Activated naive CD4-positive, alpha-beta T cell treated with anti-CD3 and anti-CD28 coated beads for 36 hours (primary cell): ENCODE measurements at regions of chr10 and their contacts with region 1.

Region 1: DNA sequence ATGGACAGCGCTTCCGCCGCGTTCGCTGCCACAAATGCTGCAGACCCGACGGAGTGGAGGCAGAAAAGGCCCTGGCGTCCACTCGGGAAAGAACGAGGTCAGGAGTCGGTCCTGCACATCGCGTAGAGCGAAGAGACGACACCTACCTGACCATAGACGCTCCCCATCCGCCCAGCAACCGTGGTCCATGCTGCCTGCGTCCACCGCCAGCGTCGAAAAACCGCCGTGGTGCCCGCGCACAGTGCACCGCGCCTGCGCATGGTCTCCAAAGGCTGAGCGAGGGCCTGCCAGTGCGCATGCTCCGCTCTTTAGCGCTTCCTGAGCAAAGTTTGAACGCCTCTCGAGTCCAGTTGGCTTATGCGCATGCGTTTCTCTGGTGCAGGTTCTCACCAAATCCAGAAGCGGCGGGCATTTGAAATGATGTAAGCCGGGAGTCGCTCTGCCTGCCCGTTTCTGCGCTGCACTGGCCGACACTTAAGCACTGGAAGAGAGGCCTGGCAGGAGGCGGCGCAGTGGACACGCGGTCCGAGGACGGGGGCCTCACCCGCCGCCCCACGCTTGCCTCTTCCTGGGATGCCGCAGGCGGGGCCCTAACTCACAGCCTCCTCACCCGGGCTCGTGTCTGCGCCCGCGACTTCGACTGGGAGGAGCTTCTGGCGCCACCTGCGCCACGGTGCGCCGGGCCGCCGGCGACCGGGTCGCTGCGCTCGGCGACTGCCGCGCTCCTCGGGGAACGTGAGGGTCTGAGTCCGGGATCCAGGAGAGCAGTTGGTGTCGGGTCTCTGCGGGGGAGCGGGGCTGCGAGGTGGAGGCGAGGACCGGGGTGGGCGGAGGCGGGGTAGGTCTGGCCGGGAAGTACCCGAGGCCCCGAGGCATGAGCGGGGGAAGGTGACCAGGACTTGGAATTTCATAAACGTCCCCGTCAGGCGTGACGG is at the start of gene FAM24B:
- DNase-seq: peak; percentile 95
- H3K4me3 Mint-ChIP-seq: peak within 1 kb of the TSS; percentile 82
- H3K27ac Mint-ChIP-seq: peak within 1 kb of the TSS; percentile 90
- H3K4me1 Mint-ChIP-seq: peaks cover 45% of the 10 kb centered on the region
- H3K27me3 Mint-ChIP-seq: peaks cover 3% of the 10 kb centered on the region
- total RNA-seq, gene FAM24B: 8.0 to 8.1 TPM

Region 2: DNA sequence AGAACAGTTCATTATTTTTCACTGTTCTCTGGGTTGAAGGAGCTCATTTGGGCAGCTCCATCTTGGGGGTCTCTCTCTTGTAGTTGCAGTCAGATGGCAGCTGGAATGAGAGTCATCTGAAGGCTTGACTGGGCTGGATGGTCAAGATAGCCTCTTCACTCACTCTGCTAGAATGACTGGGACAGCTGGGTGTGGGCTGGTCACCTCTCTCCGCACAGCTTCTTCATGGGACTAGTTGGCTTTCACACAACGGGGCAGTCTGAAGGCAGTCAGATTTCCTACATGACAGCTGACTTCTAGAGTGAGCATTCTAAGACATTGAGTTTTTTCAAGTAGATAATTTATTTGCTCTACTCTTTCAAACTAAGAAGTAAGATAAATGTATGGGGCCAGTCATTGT is 492.0 kb before region 1 on chr10:
- CTCF ChIA-PET with region 1: no interaction called
- intact Hi-C with region 1: no loop called
- DNase-seq: no peak
- H3K4me3 Mint-ChIP-seq: no peak overlapping the region
- H3K27ac Mint-ChIP-seq: no peak overlapping the region
- H3K4me1 Mint-ChIP-seq: peaks cover 60% of the 10 kb centered on the region
- H3K27me3 Mint-ChIP-seq: no peaks in the 10 kb centered on the region

Region 3: GRCh38 chr10:122911889-122912484 is 32.4 kb after region 1 on chr10:
- CTCF ChIA-PET with region 1: no interaction called
- intact Hi-C with region 1: loop called (anchors 2 kb)
- DNase-seq: peak; percentile 74
- H3K4me3 Mint-ChIP-seq: no peak overlapping the region
- H3K27ac Mint-ChIP-seq: no peak overlapping the region
- H3K4me1 Mint-ChIP-seq: no peaks in the 10 kb centered on the region
- H3K27me3 Mint-ChIP-seq: peaks cover 8% of the 10 kb centered on the region

Region 4: DNA sequence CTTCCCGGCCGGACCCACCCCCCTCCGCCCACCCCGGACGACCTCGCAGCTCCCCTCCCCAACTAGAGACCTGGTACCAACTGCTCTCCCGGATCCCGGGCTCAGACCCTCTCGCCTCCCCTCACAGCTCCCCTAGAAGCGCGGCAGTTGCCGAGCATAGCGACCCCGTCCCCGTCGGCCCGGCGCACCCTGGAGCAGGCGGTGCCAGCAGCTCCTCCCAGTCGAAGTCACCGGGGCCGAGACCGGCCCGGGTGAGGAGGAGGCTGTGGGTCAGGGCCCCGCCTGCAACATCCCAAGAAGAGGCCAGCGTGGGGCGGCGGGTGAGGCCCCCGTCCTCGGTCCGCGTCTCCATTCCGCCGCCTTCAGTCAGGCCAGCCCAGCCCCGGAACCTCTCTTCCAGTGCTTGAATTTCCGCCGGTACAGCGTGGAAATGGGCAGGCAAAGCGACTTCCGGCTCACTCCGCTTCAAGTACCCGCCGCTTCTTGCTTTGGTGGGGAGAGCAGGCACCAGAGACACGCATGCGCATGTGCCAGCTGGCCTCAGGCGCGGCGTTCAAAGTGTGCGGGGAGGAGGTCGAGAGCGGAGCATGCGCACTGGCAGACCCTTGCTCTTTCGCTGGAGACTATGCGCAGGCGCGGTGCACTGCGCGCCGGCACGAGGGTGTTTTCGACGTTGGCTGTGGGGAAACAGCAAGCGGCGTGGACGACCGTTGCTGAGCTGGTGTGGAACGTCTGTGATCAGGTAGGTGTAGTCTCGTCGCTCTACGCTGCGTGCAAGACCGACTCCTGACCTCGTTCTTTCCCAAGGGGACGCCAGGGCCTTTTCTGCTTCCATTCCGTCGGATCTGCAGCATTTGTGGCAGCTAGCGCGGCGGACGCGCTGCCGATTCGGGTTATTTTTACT is 74.5 kb after region 1 on chr10 and contains the start of gene C10orf88:
- CTCF ChIA-PET with region 1: no interaction called
- intact Hi-C with region 1: loop called (anchors 1 kb)
- DNase-seq: peak; percentile 97
- H3K4me3 Mint-ChIP-seq: peak within 1 kb of the TSS; percentile 81
- H3K27ac Mint-ChIP-seq: peak within 1 kb of the TSS; percentile 82
- H3K4me1 Mint-ChIP-seq: peaks cover 28% of the 10 kb centered on the region
- H3K27me3 Mint-ChIP-seq: no peaks in the 10 kb centered on the region
- total RNA-seq, gene C10orf88: 4.2 to 5.2 TPM

Region 5: GRCh38 chr10:122980209-122981065 is 100.8 kb after region 1 on chr10 and contains the start of gene PSTK:
- CTCF ChIA-PET with region 1: no interaction called
- intact Hi-C with region 1: loop called (anchors 1 kb)
- DNase-seq: peak; percentile 90
- H3K4me3 Mint-ChIP-seq: peak within 1 kb of the TSS; percentile 87
- H3K27ac Mint-ChIP-seq: peak within 1 kb of the TSS; percentile 92
- H3K4me1 Mint-ChIP-seq: peaks cover 17% of the 10 kb centered on the region
- H3K27me3 Mint-ChIP-seq: no peaks in the 10 kb centered on the region
- total RNA-seq, gene PSTK: 3.9 to 4.2 TPM

Region 6: GRCh38 chr10:123287594-123288247 is 408.1 kb after region 1 on chr10:
- CTCF ChIA-PET with region 1: no interaction called
- intact Hi-C with region 1: loop called (anchors 2 kb)
- DNase-seq: peak; percentile 78
- H3K4me3 Mint-ChIP-seq: no peak overlapping the region
- H3K27ac Mint-ChIP-seq: peak overlapping the region; percentile 78
- H3K4me1 Mint-ChIP-seq: peaks cover 19% of the 10 kb centered on the region
- H3K27me3 Mint-ChIP-seq: peaks cover 2% of the 10 kb centered on the region